ENCODE measurements at regions of chr3 and their contacts with region 1.

Region 1: DNA sequence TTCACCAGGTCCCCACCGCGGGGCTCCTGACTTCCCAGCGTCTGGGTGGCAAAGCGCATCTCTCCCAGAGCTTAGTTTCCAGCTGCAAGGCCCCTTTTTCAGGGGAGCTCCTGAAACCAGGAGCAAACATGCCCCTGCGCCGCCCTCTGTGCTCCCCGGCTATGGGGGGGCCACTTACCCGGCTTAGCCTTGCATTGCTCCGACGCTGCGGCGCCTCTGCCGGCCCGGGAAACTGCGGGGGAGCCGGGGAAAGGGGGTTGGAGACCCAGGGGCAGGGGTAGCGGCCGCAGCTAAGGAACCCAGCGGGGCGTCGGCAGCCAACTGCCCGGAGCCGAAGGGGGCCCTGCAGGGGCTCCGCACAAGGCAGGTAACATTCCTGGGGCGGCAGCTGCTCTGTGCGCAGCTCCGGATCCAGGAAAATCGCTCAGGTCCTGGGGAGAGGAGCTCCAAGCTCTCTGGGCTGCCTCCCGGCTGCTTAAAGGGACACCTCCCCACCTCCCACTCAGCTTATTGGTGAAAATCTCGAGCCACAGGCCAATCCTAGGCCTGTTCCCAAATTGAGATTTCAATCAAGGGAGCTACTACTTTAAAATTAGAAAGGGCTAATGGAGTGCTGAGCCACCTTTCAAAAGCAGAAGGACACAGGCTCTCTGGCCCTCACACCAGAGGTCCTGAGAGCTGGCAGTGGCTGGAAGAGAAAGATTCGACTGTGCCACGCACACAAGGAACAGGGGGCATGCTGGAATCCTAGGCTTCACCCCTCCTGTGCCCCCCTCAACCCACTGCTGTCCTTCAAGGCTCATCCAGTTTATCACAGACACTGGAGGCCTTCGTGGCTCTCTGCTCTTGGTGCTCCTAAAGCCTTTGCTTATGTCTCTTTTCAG is 42.7 kb upstream of the PRICKLE2 start:
- DNase-seq: peak; percentile 94
- H3K4me3 ChIP-seq: peak overlapping the region; percentile 74 to 91 (median 80)
- H3K27ac ChIP-seq: peak overlapping the region; percentile 92 to 97 (median 94)
- H3K4me1 ChIP-seq: peaks cover 0 to 36% (median 27%) of the 10 kb centered on the region in 4 donors
- H3K27me3 ChIP-seq: no peaks in the 10 kb centered on the region
- CTCF ChIP-seq: no peak
- EP300 ChIP-seq: no peak
- POLR2A ChIP-seq: peak; percentile 73 to 88

Region 2: GRCh38 chr3:64150623-64151207 is 117.2 kb before region 1 on chr3:
- intact Hi-C with region 1: loop called (anchors 5 kb)
- DNase-seq: peak; percentile 92
- H3K4me3 ChIP-seq: no peak overlapping the region
- H3K27ac ChIP-seq: peak overlapping the region; percentile 84 to 96 (median 87)
- H3K4me1 ChIP-seq: peaks cover 0 to 60% (median 46%) of the 10 kb centered on the region in 4 donors
- H3K27me3 ChIP-seq: no peaks in the 10 kb centered on the region
- CTCF ChIP-seq: no peak
- EP300 ChIP-seq: peak; percentile 55 to 91 (median 75)
- POLR2A ChIP-seq: no peak

Region 3: GRCh38 chr3:64291345-64291744 is 23.4 kb after region 1 on chr3:
- intact Hi-C with region 1: loop called (anchors 2 kb)
- DNase-seq: peak; percentile 83
- H3K4me3 ChIP-seq: no peak overlapping the region
- H3K27ac ChIP-seq: peak overlapping the region; percentile 26 to 56 (median 49)
- H3K4me1 ChIP-seq: peaks cover 0 to 44% (median 33%) of the 10 kb centered on the region in 4 donors
- H3K27me3 ChIP-seq: no peaks in the 10 kb centered on the region
- CTCF ChIP-seq: no peak
- EP300 ChIP-seq: no peak
- POLR2A ChIP-seq: no peak

Region 4: DNA sequence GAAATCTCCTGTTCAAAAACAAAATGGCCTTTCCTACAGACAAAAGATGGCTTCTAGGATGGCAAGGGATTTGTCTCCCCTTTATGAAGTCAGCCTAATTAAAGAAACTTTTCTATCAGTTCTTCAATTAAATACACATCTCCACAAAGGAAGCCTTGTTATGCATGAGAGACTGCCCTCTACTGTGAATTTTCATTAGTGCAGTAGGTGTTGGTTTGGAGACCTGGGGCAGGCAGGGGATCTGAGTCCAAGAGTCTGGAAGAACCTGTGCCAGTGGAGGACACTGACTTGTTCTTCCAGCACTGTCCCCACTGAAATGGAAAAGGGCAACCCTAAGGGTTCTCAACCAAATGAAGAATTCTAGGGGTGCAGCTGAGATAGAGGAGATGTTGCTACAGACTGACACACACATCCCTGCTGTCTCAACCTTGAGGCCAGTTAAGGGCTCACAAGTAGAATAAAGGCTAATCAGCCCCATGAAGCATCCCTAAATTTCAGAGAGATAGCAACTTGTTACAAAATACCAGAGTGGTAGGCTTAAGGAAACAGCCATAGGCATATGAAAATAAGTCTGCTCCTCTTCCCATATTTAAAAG is 131.3 kb after region 1 on chr3:
- intact Hi-C with region 1: loop called (anchors 2 kb)
- DNase-seq: no peak
- H3K4me3 ChIP-seq: no peak overlapping the region
- H3K27ac ChIP-seq: peak overlapping the region in 3 of 4 donors; percentile 66 to 83 (median 80)
- H3K4me1 ChIP-seq: peaks cover 0 to 31% (median 24%) of the 10 kb centered on the region in 4 donors
- H3K27me3 ChIP-seq: no peaks in the 10 kb centered on the region
- CTCF ChIP-seq: peak; percentile 73 to 87 (median 76)
- EP300 ChIP-seq: no peak
- POLR2A ChIP-seq: no peak

Measured in sigmoid colon (tissue), 7 donors.